ENCODE measurements at regions of chr10 and their contacts with region 1.

Region 1: GRCh38 chr10:29590915-29591650 is 43.7 kb downstream of the SVIL start:
- DNase-seq: no peak
- ATAC-seq: no peak
- H3K4me3 ChIP-seq: no peak overlapping the region
- H3K27ac ChIP-seq: no peak overlapping the region
- H3K4me1 ChIP-seq: peaks cover 9 to 11% of the 10 kb centered on the region in 2 experiments; a peak in 3 of 4 replicates
- H3K27me3 ChIP-seq: no peaks in the 10 kb centered on the region
- CTCF ChIP-seq: 0 out of 6 replicates have a peak, but pooled peaks of 1 of the 3 experiments have one; percentile 1
- POLR2A ChIP-seq: no peak
- RAD21 ChIP-seq: no peak

Region 2: DNA sequence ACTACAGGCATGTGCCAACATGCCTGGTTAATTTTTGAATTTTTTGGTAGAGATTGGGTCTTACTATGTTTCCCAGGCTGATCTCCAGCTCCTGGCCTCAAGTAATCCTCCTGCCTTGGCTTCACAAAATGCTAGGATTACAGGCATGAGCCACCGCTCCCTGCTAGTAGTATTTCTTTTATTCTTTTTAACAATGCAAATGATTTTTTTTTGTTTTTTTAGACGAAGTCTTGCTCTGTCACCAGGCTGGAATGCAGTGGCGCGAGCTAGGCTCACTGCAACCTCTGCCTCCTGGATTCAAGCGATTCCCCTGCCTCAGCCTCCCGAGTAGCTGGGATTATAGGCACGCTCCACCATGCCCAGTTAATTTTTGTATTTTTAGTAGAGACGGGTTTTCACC is 14.4 kb before region 1 on chr10:
- CTCF ChIA-PET with region 1: no interaction called
- POLR2A ChIA-PET with region 1: no interaction called
- RAD21 ChIA-PET with region 1: no interaction called
- intact Hi-C with region 1: no loop called
- DNase-seq: no peak
- ATAC-seq: no peak
- H3K4me3 ChIP-seq: no peak overlapping the region
- H3K27ac ChIP-seq: no peak overlapping the region
- H3K4me1 ChIP-seq: peaks cover 8 to 14% of the 10 kb centered on the region in 2 experiments; a peak in 2 of 4 replicates
- H3K27me3 ChIP-seq: no peaks in the 10 kb centered on the region
- CTCF ChIP-seq: no peak
- POLR2A ChIP-seq: no peak
- RAD21 ChIP-seq: no peak

Region 3: GRCh38 chr10:29857843-29858701 is 267.0 kb after region 1 on chr10:
- CTCF ChIA-PET with region 1: no interaction called
- POLR2A ChIA-PET with region 1: no interaction called
- RAD21 ChIA-PET with region 1: no interaction called
- intact Hi-C with region 1: loop called (anchors 5 kb)
- DNase-seq: peak; percentile 36
- ATAC-seq: peak; percentile 74
- H3K4me3 ChIP-seq: no peak overlapping the region
- H3K27ac ChIP-seq: no peak overlapping the region
- H3K4me1 ChIP-seq: peaks cover 6 to 20% of the 10 kb centered on the region in 2 experiments; a peak in 3 of 4 replicates
- H3K27me3 ChIP-seq: no peaks in the 10 kb centered on the region
- CTCF ChIP-seq: peak; percentile 66 to 86 (median 70)
- POLR2A ChIP-seq: no peak
- RAD21 ChIP-seq: peak; percentile 85

Measured in HCT116 (cell line).